CD8-positive, alpha-beta T cell (primary cell): ENCODE measurements at regions of chr10 and their contacts with region 1.

Region 1: GRCh38 chr10:68067029-68067428 is 8.1 kb downstream of the HERC4 start:
- DNase-seq: no peak
- ATAC-seq: no peak
- H3K4me3 ChIP-seq: no peak overlapping the region
- H3K4me3 Mint-ChIP-seq: no peak overlapping the region
- H3K27ac ChIP-seq: no peak overlapping the region
- H3K27ac Mint-ChIP-seq: peak overlapping the region; percentile 12
- H3K4me1 ChIP-seq: peaks cover 14% of the 10 kb centered on the region
- H3K4me1 Mint-ChIP-seq: peaks cover 50% of the 10 kb centered on the region
- H3K27me3 ChIP-seq: no peaks in the 10 kb centered on the region
- H3K27me3 Mint-ChIP-seq: no peaks in the 10 kb centered on the region
- CTCF ChIP-seq: no peak

Region 2: DNA sequence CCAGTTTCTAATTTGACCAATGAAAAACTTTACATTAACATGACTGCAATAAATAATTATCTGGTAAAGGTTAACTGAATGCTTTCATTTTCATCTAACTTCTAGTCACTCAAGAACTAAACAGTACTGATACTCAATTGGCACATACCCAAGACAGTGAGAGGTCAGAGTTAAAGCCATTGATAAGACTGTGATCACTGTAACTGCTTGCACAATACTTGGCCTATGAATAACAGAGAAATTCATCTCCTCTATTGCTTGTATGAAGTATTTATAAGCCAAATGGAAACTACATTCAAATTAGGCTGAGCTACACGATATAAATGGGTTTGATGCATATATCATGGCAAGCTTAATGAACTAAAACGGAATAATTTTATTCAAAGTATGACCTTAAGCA is 34.9 kb before region 1 on chr10:
- CTCF ChIA-PET with region 1: interaction called, 3 read pairs
- POLR2A ChIA-PET with region 1: no interaction called
- intact Hi-C with region 1: loop called in 1 of 2 experiments (anchors 5 kb)
- DNase-seq: no peak
- ATAC-seq: no peak
- H3K4me3 ChIP-seq: no peak overlapping the region
- H3K4me3 Mint-ChIP-seq: no peak overlapping the region
- H3K27ac ChIP-seq: no peak overlapping the region
- H3K27ac Mint-ChIP-seq: no peak overlapping the region
- H3K4me1 ChIP-seq: no peaks in the 10 kb centered on the region
- H3K4me1 Mint-ChIP-seq: peaks cover 9% of the 10 kb centered on the region
- H3K27me3 ChIP-seq: no peaks in the 10 kb centered on the region
- H3K27me3 Mint-ChIP-seq: no peaks in the 10 kb centered on the region
- CTCF ChIP-seq: no peak